Activated naive CD4-positive, alpha-beta T cell treated with anti-CD3 and anti-CD28 coated beads for 36 hours (primary cell): ENCODE measurements at regions of chr6 and their contacts with region 1.

Region 1: GRCh38 chr6:15317934-15318902 is 72.3 kb downstream of the JARID2 start:
- DNase-seq: peak; percentile 72
- H3K4me3 Mint-ChIP-seq: peak overlapping the region; percentile 57
- H3K27ac Mint-ChIP-seq: peak overlapping the region; percentile 84
- H3K4me1 Mint-ChIP-seq: peaks cover 93% of the 10 kb centered on the region
- H3K27me3 Mint-ChIP-seq: no peaks in the 10 kb centered on the region

Region 2: GRCh38 chr6:15299430-15300131 is 18.6 kb before region 1 on chr6:
- CTCF ChIA-PET with region 1: interaction called, 6 read pairs
- intact Hi-C with region 1: loop called (anchors 1 kb)
- DNase-seq: peak; percentile 36
- H3K4me3 Mint-ChIP-seq: no peak overlapping the region
- H3K27ac Mint-ChIP-seq: no peak overlapping the region
- H3K4me1 Mint-ChIP-seq: peaks cover 82% of the 10 kb centered on the region
- H3K27me3 Mint-ChIP-seq: no peaks in the 10 kb centered on the region